Activated B cell treated with CpG ODN at 0.5 μM for 24 hours (primary cell): ENCODE measurements at regions of chr2 and their contacts with region 1.

Region 1: GRCh38 chr2:222690564-222691200 is 19.2 kb downstream of the MOGAT1 start:
- DNase-seq: peak; percentile 50
- ATAC-seq: peak; percentile 99
- H3K4me3 Mint-ChIP-seq: no peak overlapping the region
- H3K27ac Mint-ChIP-seq: no peak overlapping the region
- H3K4me1 Mint-ChIP-seq: peaks cover 4% of the 10 kb centered on the region
- H3K27me3 Mint-ChIP-seq: peaks cover 10% of the 10 kb centered on the region
- CTCF ChIP-seq: peak; percentile 94

Region 2: DNA sequence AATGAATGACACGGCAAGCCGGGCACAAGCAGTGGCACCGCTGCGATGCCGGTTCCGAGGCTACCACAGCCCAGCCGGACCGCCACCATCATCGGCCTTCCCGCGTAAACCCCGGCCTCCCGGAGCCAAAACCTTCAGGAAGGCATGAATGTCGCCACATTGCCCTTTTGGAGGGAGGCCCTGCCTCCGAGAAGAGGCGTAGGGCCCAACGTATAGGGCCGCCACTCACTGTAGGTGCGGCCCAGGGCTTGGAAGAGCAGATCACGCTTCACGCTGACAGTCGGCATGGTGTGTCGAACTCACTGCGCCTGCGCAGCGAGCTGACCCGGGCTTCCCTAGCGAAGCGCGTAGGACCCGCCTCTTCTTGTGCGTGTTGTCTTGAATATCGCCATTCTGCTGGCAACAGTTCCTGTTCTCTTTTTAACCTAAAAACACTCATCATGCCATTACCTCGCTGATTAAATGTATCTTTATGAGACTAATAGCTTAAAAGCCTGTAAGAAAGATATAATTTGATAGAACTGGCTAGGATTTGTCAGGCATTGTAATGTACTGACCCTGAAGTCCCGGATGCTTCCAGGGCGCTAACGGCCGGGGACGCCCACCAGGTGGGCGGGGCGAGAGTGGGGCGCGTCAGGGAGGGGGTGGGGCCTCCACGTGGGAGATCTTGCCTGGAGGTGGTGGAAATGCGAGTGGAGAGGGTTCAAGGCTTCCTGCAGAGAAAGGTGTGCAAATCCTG is 34.7 kb before region 1 on chr2 and contains the start of gene FARSB:
- CTCF ChIA-PET with region 1: interaction called, 6 read pairs
- POLR2A ChIA-PET with region 1: no interaction called
- intact Hi-C with region 1: loop called (anchors 1 kb)
- DNase-seq: peak; percentile 81
- ATAC-seq: peak; percentile 93
- H3K4me3 Mint-ChIP-seq: peak within 1 kb of the TSS; percentile 97
- H3K27ac Mint-ChIP-seq: peak within 1 kb of the TSS; percentile 99
- H3K4me1 Mint-ChIP-seq: peaks cover 47% of the 10 kb centered on the region
- H3K27me3 Mint-ChIP-seq: no peaks in the 10 kb centered on the region
- CTCF ChIP-seq: no peak
- total RNA-seq, gene FARSB: 21.6 and 23.3 TPM in 2 replicates

Region 3: DNA sequence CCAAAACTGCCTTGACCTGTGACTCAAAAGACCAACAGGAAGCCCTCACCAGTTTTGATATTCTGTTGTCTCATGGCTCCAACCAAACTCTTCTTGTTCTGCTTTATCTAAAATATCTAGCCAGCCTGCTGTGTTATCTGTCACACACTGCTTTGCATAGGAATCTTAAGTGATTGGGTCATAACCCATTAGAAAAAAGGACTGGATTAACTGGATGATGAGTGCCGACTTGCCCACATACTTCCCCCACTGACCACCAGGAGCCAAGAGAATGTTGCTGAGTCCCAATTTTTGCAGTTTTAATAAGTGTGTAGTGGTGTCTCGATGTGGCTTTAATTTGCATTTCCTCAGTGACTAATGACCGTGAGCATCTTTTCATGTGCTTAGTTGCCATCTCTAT is 12.7 kb before region 1 on chr2:
- CTCF ChIA-PET with region 1: interaction called, 13 read pairs
- POLR2A ChIA-PET with region 1: no interaction called
- intact Hi-C with region 1: no loop called
- DNase-seq: no peak
- ATAC-seq: no peak
- H3K4me3 Mint-ChIP-seq: no peak overlapping the region
- H3K27ac Mint-ChIP-seq: no peak overlapping the region
- H3K4me1 Mint-ChIP-seq: peaks cover 4% of the 10 kb centered on the region
- H3K27me3 Mint-ChIP-seq: peaks cover 48% of the 10 kb centered on the region
- CTCF ChIP-seq: no peak

Region 4: GRCh38 chr2:222903234-222904220 is 212.8 kb after region 1 on chr2:
- CTCF ChIA-PET with region 1: interaction called, 7 read pairs
- POLR2A ChIA-PET with region 1: no interaction called
- intact Hi-C with region 1: loop called (anchors 1 kb)
- DNase-seq: no peak
- ATAC-seq: peak; percentile 69
- H3K4me3 Mint-ChIP-seq: no peak overlapping the region
- H3K27ac Mint-ChIP-seq: no peak overlapping the region
- H3K4me1 Mint-ChIP-seq: peaks cover 9% of the 10 kb centered on the region
- H3K27me3 Mint-ChIP-seq: no peaks in the 10 kb centered on the region
- CTCF ChIP-seq: no peak

Region 5: GRCh38 chr2:222939208-222939856 is 248.7 kb after region 1 on chr2:
- CTCF ChIA-PET with region 1: interaction called, 9 read pairs
- POLR2A ChIA-PET with region 1: no interaction called
- intact Hi-C with region 1: loop called (anchors 1 kb)
- DNase-seq: peak; percentile 18
- ATAC-seq: peak; percentile 81
- H3K4me3 Mint-ChIP-seq: no peak overlapping the region
- H3K27ac Mint-ChIP-seq: no peak overlapping the region
- H3K4me1 Mint-ChIP-seq: no peaks in the 10 kb centered on the region
- H3K27me3 Mint-ChIP-seq: no peaks in the 10 kb centered on the region
- CTCF ChIP-seq: no peak